H1 (cell line): ENCODE measurements at regions of chr10 and their contacts with region 1.

Region 1: DNA sequence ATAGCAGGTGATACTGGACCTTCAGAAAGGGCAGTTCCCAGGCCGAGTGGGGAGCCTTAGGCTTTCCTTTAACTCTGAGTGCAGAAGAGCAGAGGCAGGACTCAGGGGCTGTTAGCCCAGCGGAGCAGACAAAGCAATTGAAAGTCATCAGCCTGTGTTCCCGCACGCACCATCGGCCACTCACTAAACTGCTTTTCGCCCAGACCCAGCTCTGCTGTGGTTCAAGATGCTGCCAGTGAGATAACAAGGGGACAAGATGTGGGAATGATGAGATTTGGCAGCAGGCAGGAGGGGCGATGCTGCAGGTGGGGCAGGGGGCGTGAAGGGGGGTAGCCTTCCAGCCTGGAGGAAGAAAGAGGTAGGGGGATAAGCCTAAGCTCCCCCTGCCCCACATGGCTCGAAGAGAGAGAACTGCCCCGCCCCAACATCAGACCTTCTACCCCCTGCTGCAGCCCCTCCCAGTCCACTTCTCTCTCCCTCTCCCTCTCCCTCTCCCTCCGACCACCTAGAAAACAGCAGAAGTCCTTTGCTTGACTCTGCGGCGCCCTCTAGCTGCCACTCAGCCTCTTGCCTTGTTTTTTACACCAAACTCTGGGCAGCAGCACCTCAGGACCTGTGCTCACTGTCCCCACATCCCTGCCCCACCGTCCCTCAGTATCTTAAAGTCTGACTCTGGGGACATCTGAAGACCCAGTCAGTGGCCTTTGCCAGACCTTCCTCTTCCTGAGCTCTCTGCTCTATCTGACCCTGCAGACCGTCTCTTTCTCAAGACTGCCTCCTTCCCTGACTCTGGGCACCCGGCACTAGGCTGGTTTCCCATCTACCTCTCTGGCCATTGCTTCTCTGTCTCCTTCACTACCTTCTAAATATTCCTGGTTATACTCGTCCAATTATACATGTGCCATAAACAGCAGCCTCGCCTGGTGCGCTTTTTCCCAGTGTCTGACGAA is 110.5 kb downstream of the C10orf105 start:
- DNase-seq: peak; percentile 67 to 92
- H3K4me3 ChIP-seq: no peak overlapping the region
- H3K27ac ChIP-seq: no peak overlapping the region
- H3K4me1 ChIP-seq: peaks cover 6 to 18% (median 17%) of the 10 kb centered on the region in 4 experiments
- H3K27me3 ChIP-seq: no peaks in the 10 kb centered on the region
- CTCF ChIP-seq: peak; percentile 85 to 95 (median 91)
- EP300 ChIP-seq: no peak
- POLR2A ChIP-seq: no peak
- RAD21 ChIP-seq: peak; percentile 85 to 90

Region 2: GRCh38 chr10:71302874-71303568 is 306.1 kb before region 1 on chr10:
- CTCF ChIA-PET with region 1: interaction called, 13 read pairs
- POLR2A ChIA-PET with region 1: no interaction called
- DNase-seq: no peak
- H3K4me3 ChIP-seq: no peak overlapping the region
- H3K27ac ChIP-seq: no peak overlapping the region
- H3K4me1 ChIP-seq: peaks cover 0 to 4% (median 0%) of the 10 kb centered on the region in 4 experiments; a peak in 3 of 7 replicates
- H3K27me3 ChIP-seq: no peaks in the 10 kb centered on the region
- CTCF ChIP-seq: peak in 2 of 3 experiments; percentile 31 to 60; a peak in 3 of 4 replicates
- EP300 ChIP-seq: no peak
- POLR2A ChIP-seq: no peak
- RAD21 ChIP-seq: peak; percentile 45 to 50

Region 3: DNA sequence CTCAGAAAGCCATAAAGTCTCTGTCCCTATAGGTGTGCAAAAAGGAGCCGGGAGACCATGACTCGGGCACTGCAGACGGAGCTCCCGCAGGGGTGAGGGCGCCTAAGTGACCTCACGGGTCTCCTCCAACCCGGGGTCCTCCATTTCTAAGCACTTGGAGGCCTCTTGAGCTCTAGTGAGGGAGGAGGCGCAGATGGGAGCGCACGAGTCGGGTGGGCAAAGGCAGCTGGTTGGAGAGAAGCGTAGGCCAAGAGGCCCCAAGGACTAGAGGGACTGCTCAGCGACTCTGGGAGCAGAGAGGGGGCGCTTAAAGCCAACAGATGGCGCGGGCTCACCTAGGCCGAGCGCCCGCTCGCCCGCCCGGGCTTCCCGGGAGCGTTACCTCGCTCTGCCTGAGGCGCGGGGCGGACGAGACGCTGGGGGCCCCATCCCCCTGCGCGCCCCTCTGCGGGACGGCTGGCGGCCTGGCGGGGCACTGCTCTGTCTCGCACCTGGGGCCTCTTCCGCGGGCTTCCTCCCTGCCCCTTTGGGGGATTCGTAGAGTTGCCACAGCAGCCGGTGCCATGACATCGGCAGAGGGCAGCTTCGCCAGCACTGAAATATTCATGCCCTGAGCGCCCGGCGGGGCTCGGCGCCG is 212.9 kb before region 1 on chr10:
- CTCF ChIA-PET with region 1: interaction called, 21 read pairs
- POLR2A ChIA-PET with region 1: no interaction called
- DNase-seq: peak; percentile 60 to 79
- H3K4me3 ChIP-seq: peak overlapping the region; percentile 54 to 86 (median 62)
- H3K27ac ChIP-seq: no peak overlapping the region
- H3K4me1 ChIP-seq: peaks cover 0 to 18% (median 10%) of the 10 kb centered on the region in 4 experiments; a peak in 6 of 7 replicates
- H3K27me3 ChIP-seq: peaks cover 15 to 50% (median 40%) of the 10 kb centered on the region in 4 experiments
- CTCF ChIP-seq: peak; percentile 55 to 84 (median 71)
- EP300 ChIP-seq: no peak
- POLR2A ChIP-seq: no peak
- RAD21 ChIP-seq: peak; percentile 84 to 88

Region 4: DNA sequence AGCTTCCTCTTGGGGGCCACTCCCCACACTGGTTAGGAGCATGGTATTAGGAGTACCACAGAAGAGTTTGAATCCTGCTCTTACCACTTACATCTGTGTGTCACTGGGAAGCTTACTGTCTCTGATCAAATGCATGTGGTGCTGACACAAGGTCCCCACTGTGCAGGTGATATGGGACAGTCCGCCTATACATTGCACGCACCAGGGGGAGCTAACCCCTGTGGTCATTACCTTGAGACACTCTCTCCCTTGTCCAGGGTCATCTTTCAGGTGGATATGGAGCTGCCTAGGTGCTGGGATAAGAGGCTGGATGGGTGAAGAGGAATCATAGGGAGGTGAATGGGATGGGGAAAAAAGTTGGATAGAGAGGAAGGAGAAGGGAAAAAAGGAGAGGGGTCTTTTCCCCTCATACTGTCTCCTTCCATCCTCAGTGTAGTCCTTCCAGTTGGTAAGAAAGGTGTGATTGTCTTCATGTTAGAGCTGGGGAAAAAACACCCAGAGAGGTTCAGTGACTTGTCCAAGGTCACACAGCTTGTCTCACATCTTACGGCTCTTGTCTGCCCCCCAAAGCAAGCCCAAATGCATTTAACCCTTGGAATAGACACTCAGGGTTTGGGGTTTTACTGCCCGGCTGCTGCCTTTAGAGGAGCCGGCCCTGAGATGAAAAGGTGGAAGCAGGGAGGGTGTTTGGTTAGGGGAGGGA is 86.5 kb before region 1 on chr10:
- CTCF ChIA-PET with region 1: interaction called, 10 read pairs
- POLR2A ChIA-PET with region 1: no interaction called
- DNase-seq: no peak
- H3K4me3 ChIP-seq: no peak overlapping the region
- H3K27ac ChIP-seq: no peak overlapping the region
- H3K4me1 ChIP-seq: peaks cover 0 to 3% (median 0%) of the 10 kb centered on the region in 4 experiments; a peak in 3 of 7 replicates
- H3K27me3 ChIP-seq: no peaks in the 10 kb centered on the region; a peak in 2 of 7 replicates
- CTCF ChIP-seq: peak; percentile 24 to 41 (median 37); a peak in 3 of 4 replicates
- EP300 ChIP-seq: no peak
- POLR2A ChIP-seq: no peak
- RAD21 ChIP-seq: peak; percentile 24 to 39; a peak in 3 of 4 replicates

Region 5: GRCh38 chr10:71597821-71598498 is 11.1 kb before region 1 on chr10:
- CTCF ChIA-PET with region 1: interaction called, 18 read pairs
- POLR2A ChIA-PET with region 1: interaction called, 3 read pairs
- DNase-seq: no peak
- H3K4me3 ChIP-seq: no peak overlapping the region
- H3K27ac ChIP-seq: no peak overlapping the region
- H3K4me1 ChIP-seq: no peaks in the 10 kb centered on the region
- H3K27me3 ChIP-seq: no peaks in the 10 kb centered on the region
- CTCF ChIP-seq: no peak
- EP300 ChIP-seq: no peak
- POLR2A ChIP-seq: no peak
- RAD21 ChIP-seq: no peak

Region 6: GRCh38 chr10:71647526-71648253 is 38.6 kb after region 1 on chr10:
- CTCF ChIA-PET with region 1: interaction called, 62 read pairs
- POLR2A ChIA-PET with region 1: no interaction called
- DNase-seq: peak in 1 of 2 experiments; percentile 78
- H3K4me3 ChIP-seq: no peak overlapping the region
- H3K27ac ChIP-seq: no peak overlapping the region
- H3K4me1 ChIP-seq: peaks cover 10 to 14% (median 10%) of the 10 kb centered on the region in 4 experiments
- H3K27me3 ChIP-seq: no peaks in the 10 kb centered on the region
- CTCF ChIP-seq: peak; percentile 73 to 84 (median 83)
- EP300 ChIP-seq: no peak
- POLR2A ChIP-seq: no peak
- RAD21 ChIP-seq: peak; percentile 46 to 74

Region 7: GRCh38 chr10:71933651-71934050 is 324.6 kb after region 1 on chr10:
- CTCF ChIA-PET with region 1: no interaction called
- POLR2A ChIA-PET with region 1: no interaction called
- DNase-seq: no peak
- H3K4me3 ChIP-seq: no peak overlapping the region
- H3K27ac ChIP-seq: no peak overlapping the region
- H3K4me1 ChIP-seq: no peaks in the 10 kb centered on the region
- H3K27me3 ChIP-seq: no peaks in the 10 kb centered on the region; a peak in 1 of 7 replicates
- CTCF ChIP-seq: no peak
- EP300 ChIP-seq: no peak
- POLR2A ChIP-seq: no peak
- RAD21 ChIP-seq: no peak